Panc1 (cell line): ENCODE measurements at regions of chr7 and their contacts with region 1.

Region 1: DNA sequence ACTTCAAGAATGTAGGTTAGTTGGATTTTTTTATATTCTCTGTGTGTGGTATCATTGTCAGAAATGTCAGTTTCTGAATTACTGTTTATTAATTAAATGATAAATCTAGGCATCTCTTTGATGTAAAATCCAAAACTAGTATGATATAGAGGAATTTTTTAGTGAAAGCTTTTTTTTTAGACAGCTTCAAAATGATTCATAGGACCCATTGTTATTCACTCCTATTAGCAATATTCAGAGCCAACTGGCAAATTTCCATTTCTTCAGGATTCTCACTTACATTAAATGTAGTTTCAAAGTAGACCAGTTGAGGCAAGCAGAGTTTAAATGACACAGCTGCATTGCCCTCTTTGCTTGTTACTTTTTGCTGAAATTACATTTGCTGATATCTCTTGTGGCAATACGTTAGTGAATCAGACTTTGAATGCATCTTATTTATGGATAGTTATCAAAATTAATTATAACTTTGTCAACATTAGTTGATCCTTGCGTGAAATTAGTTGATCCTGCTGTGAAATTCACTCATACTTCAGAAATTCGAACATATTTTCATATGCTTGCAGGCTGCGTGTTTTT is 20.3 kb downstream of the ZNF277 start:
- DNase-seq: no peak
- ATAC-seq: no peak
- H3K4me3 ChIP-seq: no peak overlapping the region
- H3K27ac ChIP-seq: no peak overlapping the region
- H3K4me1 ChIP-seq: no peaks in the 10 kb centered on the region
- H3K27me3 ChIP-seq: no peaks in the 10 kb centered on the region
- CTCF ChIP-seq: no peak

Region 2: DNA sequence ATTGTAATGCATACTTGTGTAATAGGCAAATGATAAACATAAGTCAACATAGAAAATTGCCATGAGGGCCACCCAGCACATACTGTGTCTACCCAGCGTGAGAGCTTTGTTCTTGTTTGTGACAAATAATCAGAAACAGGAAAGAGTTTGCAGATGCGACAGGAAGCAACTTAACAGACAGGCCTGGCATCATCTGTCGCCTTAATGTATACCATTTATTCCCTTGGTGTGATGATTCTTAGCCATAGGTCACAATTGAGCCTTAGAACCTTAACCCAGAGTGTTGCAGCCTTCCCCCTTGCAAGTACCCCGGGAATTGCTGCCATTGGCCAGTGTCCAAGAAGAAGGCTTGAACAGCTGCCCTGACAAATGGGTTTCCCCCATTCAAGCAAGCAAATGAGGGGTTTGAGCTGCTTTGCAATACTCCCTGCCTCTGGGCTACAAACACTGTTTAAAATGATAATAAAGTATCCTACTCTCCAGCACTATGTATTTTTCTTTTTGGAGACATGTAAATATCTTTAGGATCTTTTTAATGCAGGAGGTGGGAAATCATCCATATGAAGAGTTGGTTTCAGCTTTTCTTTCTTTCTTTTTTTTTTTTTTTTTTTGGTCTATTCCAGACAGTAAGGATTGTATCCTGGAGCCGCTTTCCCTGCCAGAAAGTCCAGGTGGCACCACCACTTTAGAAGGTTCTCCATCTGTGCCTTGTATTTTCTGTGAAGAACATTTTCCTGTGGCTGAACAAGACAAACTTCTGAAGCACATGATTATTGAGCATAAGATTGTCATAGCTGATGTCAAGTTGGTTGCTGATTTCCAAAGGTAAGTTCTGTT is 59.7 kb after region 1 on chr7:
- CTCF ChIA-PET with region 1: no interaction called
- POLR2A ChIA-PET with region 1: interaction called, 10 read pairs
- in situ Hi-C with region 1: no loop called
- intact Hi-C with region 1: no loop called
- DNase-seq: no peak
- ATAC-seq: no peak
- H3K4me3 ChIP-seq: no peak overlapping the region
- H3K27ac ChIP-seq: no peak overlapping the region
- H3K4me1 ChIP-seq: no peaks in the 10 kb centered on the region
- H3K27me3 ChIP-seq: no peaks in the 10 kb centered on the region
- CTCF ChIP-seq: no peak